ENCODE measurements at regions of chr2 and their contacts with region 1.

Region 1: GRCh38 chr2:38602732-38603401 is at the start of gene HNRNPLL:
- DNase-seq: peak; percentile 99
- total RNA-seq, gene HNRNPLL: 25.1 TPM

Region 2: DNA sequence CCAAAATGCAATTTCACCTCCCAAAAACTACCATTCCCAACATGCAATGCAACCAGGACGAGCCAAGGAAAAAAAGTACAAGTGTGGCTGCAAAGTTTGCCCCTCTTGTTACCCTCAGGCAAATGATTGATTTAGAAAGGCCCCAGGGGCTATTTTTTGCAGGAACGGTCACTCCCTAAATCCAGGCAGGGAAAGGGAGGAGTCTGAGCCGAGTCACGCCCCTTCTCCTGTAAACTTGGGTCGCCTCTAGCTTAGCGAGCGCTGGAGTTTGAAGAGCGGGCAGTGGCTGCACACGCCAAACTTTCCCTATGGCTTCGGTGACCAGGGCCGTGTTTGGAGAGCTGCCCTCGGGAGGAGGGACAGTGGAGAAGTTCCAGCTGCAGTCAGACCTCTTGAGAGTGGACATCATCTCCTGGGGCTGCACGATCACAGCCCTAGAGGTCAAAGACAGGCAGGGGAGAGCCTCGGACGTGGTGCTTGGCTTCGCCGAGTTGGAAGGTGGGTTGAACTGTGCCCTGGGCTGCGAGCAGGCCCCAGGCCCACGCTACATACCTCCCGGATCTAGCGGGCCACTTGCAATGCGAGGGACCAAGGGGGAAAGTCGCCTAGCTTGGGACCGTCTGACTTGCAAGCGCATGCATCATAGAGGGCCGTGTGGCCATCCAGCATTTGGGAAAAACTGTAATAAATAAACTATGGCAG is 63.1 kb after region 1 on chr2 and contains the start of gene GALM:
- intact Hi-C with region 1: loop called (anchors 5 kb)
- DNase-seq: peak; percentile 91
- total RNA-seq, gene GALM: 8.5 TPM

Region 3: DNA sequence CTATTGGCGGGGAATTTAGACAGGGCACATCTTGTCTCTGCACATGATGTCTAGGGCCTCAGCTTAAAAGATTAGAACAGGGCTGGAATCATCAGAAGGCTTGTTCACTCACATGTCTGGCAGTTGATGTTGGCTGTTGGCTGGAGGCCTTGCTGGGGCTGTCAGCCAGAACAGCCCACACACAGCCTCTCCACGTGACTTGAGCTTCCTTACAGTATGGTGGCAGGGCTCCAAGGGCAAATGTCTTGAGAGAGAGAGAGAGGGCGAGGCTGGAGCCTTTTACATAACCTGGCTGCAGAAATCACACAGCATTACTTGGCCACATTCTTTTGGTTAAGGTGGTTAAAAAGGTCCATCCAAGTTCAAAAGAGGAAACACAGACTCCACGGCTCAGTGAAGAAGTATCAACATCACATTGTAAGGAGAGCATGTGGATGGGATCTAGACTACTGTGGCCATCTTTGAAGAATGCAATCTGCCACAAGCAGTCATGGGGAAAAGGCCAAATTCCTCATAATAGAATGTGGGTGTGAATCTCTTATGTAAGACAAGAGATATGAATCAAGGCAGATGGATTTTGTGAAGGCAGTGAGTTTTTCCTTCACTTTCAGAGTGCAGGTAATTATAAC is 117.9 kb after region 1 on chr2:
- intact Hi-C with region 1: loop called (anchors 2 kb)
- DNase-seq: peak; percentile 80

Region 4: GRCh38 chr2:38750891-38751595 is 148.2 kb after region 1 on chr2 and contains the start of gene SRSF7:
- intact Hi-C with region 1: loop called (anchors 2 kb)
- DNase-seq: peak; percentile 98
- total RNA-seq, gene SRSF7: 55.0 TPM